ENCODE measurements at regions of chr15 and their contacts with region 1.

Region 1: DNA sequence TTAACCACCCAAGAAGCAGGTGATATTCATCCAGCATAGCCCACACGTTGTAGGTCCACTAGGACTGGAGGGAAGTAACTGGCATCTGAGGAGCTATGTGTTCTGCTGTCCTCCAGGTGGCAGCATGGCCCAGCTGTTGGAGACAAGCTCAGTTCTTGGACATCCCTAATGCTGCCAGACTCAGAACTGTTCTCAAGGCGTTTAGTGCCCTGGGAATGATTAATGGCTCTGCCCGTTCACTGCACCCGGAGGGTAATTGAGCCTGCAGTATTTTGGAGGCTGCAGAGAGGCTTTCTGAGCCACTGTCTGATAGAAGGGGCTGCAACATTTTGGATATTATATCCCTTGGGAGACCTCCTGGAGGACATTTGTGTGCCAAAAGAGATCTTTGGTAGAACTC is 521.2 kb upstream of the SEMA6D start:
- DNase-seq: peak; percentile 77
- H3K4me3 ChIP-seq: no peak overlapping the region
- H3K27ac ChIP-seq: no peak overlapping the region
- H3K27me3 ChIP-seq: no peaks in the 10 kb centered on the region
- CTCF ChIP-seq: peak; percentile 90

Region 2: DNA sequence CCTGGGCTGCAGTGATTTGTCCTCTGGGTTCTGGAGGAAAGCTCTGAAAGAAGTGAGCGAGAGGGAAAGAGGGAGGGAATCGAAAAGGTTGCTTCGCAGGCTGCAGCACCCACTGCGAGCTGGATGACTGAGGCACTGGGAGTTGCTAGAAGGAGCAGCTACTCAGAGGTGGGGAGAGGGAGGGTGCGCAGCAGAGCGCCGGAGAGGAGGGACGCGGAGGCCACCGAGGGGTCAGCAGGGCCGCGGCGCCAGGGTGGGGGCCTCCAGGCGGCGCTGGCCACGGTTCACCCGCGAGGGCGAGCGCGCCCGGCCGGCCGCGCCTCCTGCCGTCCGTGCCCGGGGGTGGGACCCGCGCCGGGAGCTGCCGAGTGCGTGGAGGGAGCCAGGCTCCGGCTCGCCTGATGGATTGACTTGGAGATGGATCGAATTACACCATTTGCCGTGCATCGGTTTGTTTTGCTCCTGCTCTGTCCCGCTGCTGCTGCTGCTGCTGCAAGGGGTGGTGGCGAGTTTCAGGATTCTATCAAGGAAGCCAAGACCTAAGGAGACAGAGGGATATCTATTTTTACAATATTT is 521.1 kb after region 1 on chr15 and contains the start of gene SEMA6D:
- CTCF ChIA-PET with region 1: interaction called, 57 read pairs
- POLR2A ChIA-PET with region 1: interaction called, 3 read pairs
- DNase-seq: peak; percentile 54
- H3K4me3 ChIP-seq: peak within 1 kb of the TSS; percentile 74
- H3K27ac ChIP-seq: peak within 1 kb of the TSS; percentile 59
- H3K27me3 ChIP-seq: no peaks in the 10 kb centered on the region
- CTCF ChIP-seq: peak; percentile 28; the same call in 1 of the 2 replicates
- polyA plus RNA-seq, gene SEMA6D: 7.9 and 10.7 TPM in 2 replicates

Region 3: DNA sequence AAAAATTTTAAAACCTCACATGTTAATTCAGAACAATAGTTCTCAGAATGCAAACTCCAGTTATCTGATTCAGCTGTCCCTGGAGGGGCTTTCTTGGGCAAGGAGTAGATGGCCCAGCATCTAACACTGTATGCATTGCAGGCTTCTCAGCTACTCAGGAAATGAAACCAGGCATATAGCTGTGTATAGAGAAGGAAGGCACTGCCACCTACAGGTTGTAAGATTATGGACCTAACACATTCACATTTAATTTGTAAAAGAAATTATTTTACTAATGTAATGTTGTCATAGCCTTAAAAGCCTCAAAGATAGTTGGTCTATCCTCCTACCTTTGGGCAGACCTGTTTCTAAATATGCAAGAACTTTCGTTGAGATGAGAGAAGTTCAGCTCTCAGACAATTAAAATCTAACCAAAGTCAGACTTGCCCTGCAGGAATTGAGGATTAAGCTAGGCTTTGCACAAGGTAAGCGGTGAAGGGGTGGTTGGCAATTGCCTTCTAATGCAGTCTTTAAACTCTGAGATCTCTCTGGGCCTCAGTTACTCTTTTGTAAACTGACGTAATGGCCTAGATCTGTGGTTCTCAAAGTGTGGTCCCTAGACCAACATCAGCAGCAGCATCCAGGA is 792.0 kb after region 1 on chr15:
- CTCF ChIA-PET with region 1: interaction called, 227 read pairs
- POLR2A ChIA-PET with region 1: no interaction called
- DNase-seq: peak; percentile 29
- H3K4me3 ChIP-seq: no peak overlapping the region
- H3K27ac ChIP-seq: no peak overlapping the region
- H3K27me3 ChIP-seq: no peaks in the 10 kb centered on the region
- CTCF ChIP-seq: peak; percentile 74

Region 4: GRCh38 chr15:48084759-48085590 is 888.9 kb after region 1 on chr15:
- CTCF ChIA-PET with region 1: interaction called, 80 read pairs
- POLR2A ChIA-PET with region 1: interaction called, 3 read pairs
- DNase-seq: no peak
- H3K4me3 ChIP-seq: no peak overlapping the region
- H3K27ac ChIP-seq: no peak overlapping the region
- H3K27me3 ChIP-seq: peaks cover 5% of the 10 kb centered on the region
- CTCF ChIP-seq: peak; percentile 67

Region 5: GRCh38 chr15:48250640-48251076 is 1054.6 kb after region 1 on chr15:
- CTCF ChIA-PET with region 1: interaction called, 14 read pairs
- POLR2A ChIA-PET with region 1: no interaction called
- DNase-seq: peak; percentile 42
- H3K4me3 ChIP-seq: no peak overlapping the region
- H3K27ac ChIP-seq: no peak overlapping the region
- H3K27me3 ChIP-seq: no peaks in the 10 kb centered on the region
- CTCF ChIP-seq: peak; percentile 76

Region 6: DNA sequence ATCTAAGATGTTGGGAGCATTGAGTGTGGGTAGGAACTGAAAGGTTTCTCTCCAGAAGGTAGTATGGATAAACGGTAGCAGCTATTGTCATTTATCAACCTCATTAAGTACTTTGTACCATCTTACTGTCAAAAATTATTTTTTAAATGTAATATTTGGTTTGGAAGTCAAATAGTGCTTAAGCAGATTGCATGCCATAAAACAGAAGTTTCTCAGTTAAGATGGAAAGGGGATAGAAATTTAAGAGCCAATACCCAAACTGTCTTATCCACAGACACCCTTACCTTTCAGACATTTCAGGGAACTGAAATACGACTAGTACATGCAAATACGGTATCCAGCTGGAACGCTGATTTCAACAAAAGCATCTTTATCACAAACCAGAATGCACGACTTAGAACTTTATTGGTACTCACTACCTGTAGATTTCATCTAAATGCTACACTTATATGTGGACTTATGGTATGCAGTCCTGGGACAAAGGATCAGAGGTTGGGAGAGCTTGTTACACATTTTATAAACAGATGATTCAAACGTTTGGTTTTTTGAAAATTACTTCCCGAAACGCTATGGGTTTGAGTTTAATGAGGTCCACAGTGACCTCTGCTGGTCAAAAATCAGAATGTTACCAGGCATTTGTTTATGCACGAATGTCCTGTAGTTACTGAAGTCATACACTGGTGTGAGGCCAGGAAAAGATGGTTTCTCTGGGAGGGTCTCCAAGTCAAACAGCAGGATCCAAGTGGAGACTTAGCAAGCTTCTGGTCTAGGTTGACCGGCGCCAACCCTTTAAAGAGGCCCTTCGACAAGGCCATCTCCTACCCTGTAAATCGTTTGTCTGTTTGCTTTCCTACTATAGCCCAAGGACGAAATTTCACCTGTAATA is 1089.5 kb after region 1 on chr15:
- CTCF ChIA-PET with region 1: interaction called, 47 read pairs
- POLR2A ChIA-PET with region 1: no interaction called
- DNase-seq: peak; percentile 82
- H3K4me3 ChIP-seq: no peak overlapping the region
- H3K27ac ChIP-seq: no peak overlapping the region
- H3K27me3 ChIP-seq: no peaks in the 10 kb centered on the region
- CTCF ChIP-seq: peak; percentile 66

Measured in AG04450 (cell line).